ENCODE measurements at regions of chr22 and their contacts with region 1.

Region 1: GRCh38 chr22:40024201-40025061 is 29.7 kb downstream of the FAM83F start:
- DNase-seq: peak; percentile 75
- H3K4me3 Mint-ChIP-seq: no peak overlapping the region
- H3K27ac Mint-ChIP-seq: no peak overlapping the region
- H3K4me1 Mint-ChIP-seq: no peaks in the 10 kb centered on the region
- H3K27me3 Mint-ChIP-seq: no peaks in the 10 kb centered on the region

Region 2: GRCh38 chr22:39559454-39560105 is 464.9 kb before region 1 on chr22:
- CTCF ChIA-PET with region 1: interaction called, 20 read pairs
- intact Hi-C with region 1: loop called (anchors 5 kb)
- DNase-seq: no peak
- H3K4me3 Mint-ChIP-seq: no peak overlapping the region
- H3K27ac Mint-ChIP-seq: no peak overlapping the region
- H3K4me1 Mint-ChIP-seq: peaks cover 4% of the 10 kb centered on the region
- H3K27me3 Mint-ChIP-seq: peaks cover 13% of the 10 kb centered on the region

Region 3: GRCh38 chr22:39661842-39662676 is 362.4 kb before region 1 on chr22:
- CTCF ChIA-PET with region 1: interaction called, 10 read pairs
- intact Hi-C with region 1: no loop called
- DNase-seq: peak; percentile 93
- H3K4me3 Mint-ChIP-seq: peak overlapping the region; percentile 71
- H3K27ac Mint-ChIP-seq: no peak overlapping the region
- H3K4me1 Mint-ChIP-seq: peaks cover 42% of the 10 kb centered on the region
- H3K27me3 Mint-ChIP-seq: no peaks in the 10 kb centered on the region

Region 4: GRCh38 chr22:39927544-39927943 is 96.9 kb before region 1 on chr22:
- CTCF ChIA-PET with region 1: interaction called, 23 read pairs
- intact Hi-C with region 1: no loop called
- DNase-seq: peak; percentile 69
- H3K4me3 Mint-ChIP-seq: no peak overlapping the region
- H3K27ac Mint-ChIP-seq: no peak overlapping the region
- H3K4me1 Mint-ChIP-seq: peaks cover 33% of the 10 kb centered on the region
- H3K27me3 Mint-ChIP-seq: no peaks in the 10 kb centered on the region

Region 5: DNA sequence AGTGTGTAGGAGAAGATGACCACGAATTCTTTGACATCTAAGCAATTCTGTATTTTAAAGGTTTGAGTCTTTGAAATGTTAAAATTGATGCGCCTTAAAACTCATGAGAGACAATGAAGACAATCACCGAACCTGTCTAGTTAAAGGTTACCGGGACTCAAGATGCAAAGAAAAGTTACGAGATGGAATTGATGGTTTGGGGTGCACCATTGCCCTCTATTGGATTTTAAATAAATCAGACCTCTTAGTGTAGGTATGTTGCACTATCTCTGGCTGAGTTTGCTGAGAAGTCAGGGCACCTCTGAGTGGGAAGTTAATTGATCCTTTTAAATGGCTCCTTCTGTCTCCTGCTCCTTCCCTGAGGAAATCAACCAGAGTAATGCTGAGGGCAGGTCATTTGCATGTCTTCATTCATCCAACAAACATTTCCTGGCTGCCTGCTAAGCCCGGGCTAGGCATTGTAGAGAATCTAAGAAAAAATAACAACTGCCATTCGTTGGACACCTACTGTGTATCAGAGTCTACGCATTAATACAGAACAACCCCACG is 83.6 kb before region 1 on chr22:
- CTCF ChIA-PET with region 1: interaction called, 20 read pairs
- intact Hi-C with region 1: loop called (anchors 2 kb)
- DNase-seq: no peak
- H3K4me3 Mint-ChIP-seq: peak overlapping the region; percentile 33
- H3K27ac Mint-ChIP-seq: peak overlapping the region; percentile 95
- H3K4me1 Mint-ChIP-seq: peaks cover 93% of the 10 kb centered on the region
- H3K27me3 Mint-ChIP-seq: no peaks in the 10 kb centered on the region

Region 6: GRCh38 chr22:40009292-40009769 is 15.1 kb before region 1 on chr22:
- CTCF ChIA-PET with region 1: interaction called, 18 read pairs
- intact Hi-C with region 1: no loop called
- DNase-seq: no peak
- H3K4me3 Mint-ChIP-seq: peak overlapping the region; percentile 64
- H3K27ac Mint-ChIP-seq: peak overlapping the region; percentile 54
- H3K4me1 Mint-ChIP-seq: peaks cover 16% of the 10 kb centered on the region
- H3K27me3 Mint-ChIP-seq: no peaks in the 10 kb centered on the region

Region 7: DNA sequence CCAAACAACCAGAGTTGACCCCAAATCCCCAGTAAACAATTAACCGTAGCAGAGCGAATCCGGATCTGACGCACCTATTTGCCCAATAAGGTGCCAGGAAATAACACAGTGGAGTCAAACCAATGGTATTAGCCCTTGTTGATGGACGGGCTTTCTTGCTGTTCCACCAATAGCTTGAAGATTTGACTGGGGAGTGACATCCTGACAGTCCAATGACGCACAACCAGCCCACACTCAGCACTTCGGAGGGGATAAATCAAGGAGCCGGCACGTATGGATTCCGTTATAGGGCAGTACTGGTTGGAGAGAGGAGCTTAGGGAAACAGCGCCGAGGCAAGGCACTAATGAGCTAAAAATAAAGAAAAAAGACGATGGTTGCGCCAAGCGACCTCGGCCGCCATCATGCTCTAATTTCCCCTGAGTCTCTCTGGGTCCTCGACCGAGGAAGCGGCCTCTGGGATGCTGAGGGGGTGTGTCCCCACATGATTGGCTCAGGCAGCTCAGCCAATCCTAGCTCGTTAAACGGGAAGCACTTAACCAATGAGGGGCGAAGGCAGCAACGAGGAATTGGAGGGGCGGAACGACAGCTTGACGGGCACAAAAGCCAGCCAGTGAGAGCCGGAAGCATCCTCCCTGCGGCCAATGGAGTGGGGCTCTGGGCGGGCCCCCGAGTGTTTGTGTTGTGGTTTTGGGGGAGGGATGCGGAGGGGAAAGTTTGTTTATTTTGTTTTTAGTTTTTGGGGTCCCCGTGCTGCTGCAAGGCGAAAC is 19.9 kb after region 1 on chr22:
- CTCF ChIA-PET with region 1: interaction called, 12 read pairs
- intact Hi-C with region 1: no loop called
- DNase-seq: peak; percentile 99
- H3K4me3 Mint-ChIP-seq: peak overlapping the region; percentile 92
- H3K27ac Mint-ChIP-seq: peak overlapping the region; percentile 99
- H3K4me1 Mint-ChIP-seq: peaks cover 23% of the 10 kb centered on the region
- H3K27me3 Mint-ChIP-seq: no peaks in the 10 kb centered on the region